ENCODE measurements at regions of chr17 and their contacts with region 1.

Region 1: GRCh38 chr17:81537343-81537855 is 9.2 kb downstream of the FSCN2 start:
- DNase-seq: peak in 2 of 3 donors; percentile 27 to 43
- H3K4me3 ChIP-seq: no peak overlapping the region
- H3K4me3 Mint-ChIP-seq: peak overlapping the region in 1 of 2 donors; percentile 63
- H3K27ac ChIP-seq: no peak overlapping the region
- H3K27ac Mint-ChIP-seq: no peak overlapping the region
- H3K4me1 ChIP-seq: peaks cover 7 to 12% of the 10 kb centered on the region in 2 donors
- H3K4me1 Mint-ChIP-seq: peaks cover 11% of the 10 kb centered on the region
- H3K27me3 ChIP-seq: peaks cover 9 to 48% of the 10 kb centered on the region in 2 donors
- H3K27me3 Mint-ChIP-seq: peaks cover 35 to 53% (median 41%) of the 10 kb centered on the region in 3 donors
- CTCF ChIP-seq: peak; percentile 85

Region 2: DNA sequence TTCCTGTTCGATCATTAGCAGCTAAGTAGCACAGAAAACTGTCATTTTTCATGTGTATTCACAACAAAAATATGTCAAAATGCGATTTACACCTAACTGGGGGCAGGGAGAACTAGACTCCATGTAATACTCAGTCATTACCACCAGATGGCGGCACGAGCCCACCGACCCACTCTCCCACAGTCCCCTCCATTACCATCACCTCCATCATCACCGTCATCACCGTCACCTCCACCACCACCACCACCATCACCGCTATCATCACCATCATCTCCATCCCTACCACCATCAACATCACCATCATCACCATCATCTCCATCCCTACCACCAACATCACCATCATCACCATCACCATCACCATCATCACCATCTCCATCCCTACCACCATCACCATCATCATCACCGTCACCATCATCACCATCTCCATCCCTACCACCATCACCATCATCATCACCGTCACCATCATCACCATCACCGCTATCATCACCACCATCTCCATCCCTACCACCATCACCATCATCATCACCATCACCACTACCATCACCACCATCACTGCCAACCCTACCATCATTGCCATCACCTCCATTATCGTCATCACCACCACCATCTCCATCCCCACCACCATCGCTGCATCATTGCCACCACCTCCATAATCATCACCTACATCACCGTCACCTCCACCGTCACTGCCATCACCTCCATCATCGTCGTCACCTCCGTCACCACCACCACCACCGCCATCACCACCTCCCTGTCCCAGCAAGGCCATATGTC is 283.9 kb before region 1 on chr17:
- intact Hi-C with region 1: loop called (anchors 1 to 5 kb)
- DNase-seq: peak; percentile 37 to 59 (median 57)
- H3K4me3 ChIP-seq: no peak overlapping the region
- H3K4me3 Mint-ChIP-seq: no peak overlapping the region
- H3K27ac ChIP-seq: no peak overlapping the region
- H3K27ac Mint-ChIP-seq: peak overlapping the region in 6 of 7 donors; percentile 2 to 75 (median 38)
- H3K4me1 ChIP-seq: peaks cover 18 to 22% of the 10 kb centered on the region in 2 donors
- H3K4me1 Mint-ChIP-seq: peaks cover 27% of the 10 kb centered on the region
- H3K27me3 ChIP-seq: no peaks in the 10 kb centered on the region
- H3K27me3 Mint-ChIP-seq: peaks cover 0 to 2% (median 0%) of the 10 kb centered on the region in 3 donors
- CTCF ChIP-seq: peak; percentile 86

Region 3: GRCh38 chr17:81379523-81379942 is 157.9 kb before region 1 on chr17:
- intact Hi-C with region 1: no loop called
- DNase-seq: no peak
- H3K4me3 ChIP-seq: no peak overlapping the region
- H3K4me3 Mint-ChIP-seq: no peak overlapping the region
- H3K27ac ChIP-seq: no peak overlapping the region
- H3K27ac Mint-ChIP-seq: no peak overlapping the region
- H3K4me1 ChIP-seq: no peaks in the 10 kb centered on the region
- H3K4me1 Mint-ChIP-seq: peaks cover 2% of the 10 kb centered on the region
- H3K27me3 ChIP-seq: peaks cover 0 to 8% of the 10 kb centered on the region in 2 donors
- H3K27me3 Mint-ChIP-seq: peaks cover 11 to 40% (median 30%) of the 10 kb centered on the region in 3 donors
- CTCF ChIP-seq: no peak

Region 4: GRCh38 chr17:81470944-81471803 is 66.2 kb before region 1 on chr17:
- intact Hi-C with region 1: no loop called
- DNase-seq: no peak
- H3K4me3 ChIP-seq: no peak overlapping the region
- H3K4me3 Mint-ChIP-seq: no peak overlapping the region
- H3K27ac ChIP-seq: no peak overlapping the region
- H3K27ac Mint-ChIP-seq: peak overlapping the region in 1 of 7 donors; percentile 32
- H3K4me1 ChIP-seq: peaks cover 4 to 5% of the 10 kb centered on the region in 2 donors
- H3K4me1 Mint-ChIP-seq: peaks cover 3% of the 10 kb centered on the region
- H3K27me3 ChIP-seq: no peaks in the 10 kb centered on the region
- H3K27me3 Mint-ChIP-seq: peaks cover 3 to 9% (median 4%) of the 10 kb centered on the region in 3 donors
- CTCF ChIP-seq: no peak

Measured in CD14-positive monocyte (primary cell).